Lower leg skin (tissue), 4 donors: ENCODE measurements at regions of chr19 and their contacts with region 1.

Region 1: DNA sequence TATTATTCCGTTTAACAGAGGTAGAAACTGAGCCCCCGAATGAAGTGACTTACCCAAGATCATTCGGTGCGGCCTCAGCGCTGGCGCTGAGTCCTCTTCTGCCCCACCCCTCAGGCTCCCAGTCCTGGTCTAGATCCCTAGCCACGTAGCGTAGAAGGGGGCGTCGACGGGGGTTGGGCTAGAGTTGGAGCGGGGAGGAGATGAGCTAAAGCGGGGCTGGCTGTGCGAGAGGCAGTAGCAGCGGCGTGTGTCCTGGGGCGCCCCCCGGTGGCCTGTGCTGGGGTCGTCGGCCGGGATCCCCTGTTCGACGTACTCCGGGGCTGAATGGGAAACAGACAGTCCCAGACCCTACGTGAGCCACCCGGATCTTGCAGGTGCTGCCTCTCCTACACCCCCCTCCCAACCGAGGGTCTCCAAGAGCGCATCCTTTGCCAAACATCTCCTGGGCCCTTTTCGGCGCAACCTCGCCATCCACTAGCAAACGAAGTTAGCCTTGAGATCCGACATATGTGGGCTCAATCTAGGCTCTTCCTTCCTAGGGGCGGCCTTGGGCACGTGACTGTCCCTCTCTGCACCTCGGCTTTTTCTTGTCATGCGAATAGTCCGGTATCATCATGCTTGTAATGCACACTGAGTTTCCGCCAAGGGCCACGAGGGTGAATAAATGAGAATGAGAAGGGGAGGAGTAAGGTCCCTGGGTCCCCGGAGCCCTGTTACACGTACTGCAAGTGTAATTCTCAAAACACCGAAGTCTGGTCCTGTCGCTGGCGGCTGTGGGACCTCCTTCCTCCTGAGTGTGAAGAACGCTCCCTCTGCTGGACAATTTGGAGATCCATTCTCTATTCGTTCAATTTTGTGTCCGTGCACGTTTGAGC is 47.7 kb downstream of the CYP4F22 start:
- DNase-seq: peak; percentile 86 to 99
- H3K4me3 ChIP-seq: no peak overlapping the region
- CTCF ChIP-seq: peak in 2 of 3 donors; percentile 3 to 51
- POLR2A ChIP-seq: no peak

Region 2: GRCh38 chr19:15091901-15092753 is 463.9 kb before region 1 on chr19:
- intact Hi-C with region 1: loop called (anchors 5 kb)
- DNase-seq: peak in 1 of 2 donors; percentile 55
- H3K4me3 ChIP-seq: no peak overlapping the region
- CTCF ChIP-seq: no peak
- POLR2A ChIP-seq: no peak

Region 3: DNA sequence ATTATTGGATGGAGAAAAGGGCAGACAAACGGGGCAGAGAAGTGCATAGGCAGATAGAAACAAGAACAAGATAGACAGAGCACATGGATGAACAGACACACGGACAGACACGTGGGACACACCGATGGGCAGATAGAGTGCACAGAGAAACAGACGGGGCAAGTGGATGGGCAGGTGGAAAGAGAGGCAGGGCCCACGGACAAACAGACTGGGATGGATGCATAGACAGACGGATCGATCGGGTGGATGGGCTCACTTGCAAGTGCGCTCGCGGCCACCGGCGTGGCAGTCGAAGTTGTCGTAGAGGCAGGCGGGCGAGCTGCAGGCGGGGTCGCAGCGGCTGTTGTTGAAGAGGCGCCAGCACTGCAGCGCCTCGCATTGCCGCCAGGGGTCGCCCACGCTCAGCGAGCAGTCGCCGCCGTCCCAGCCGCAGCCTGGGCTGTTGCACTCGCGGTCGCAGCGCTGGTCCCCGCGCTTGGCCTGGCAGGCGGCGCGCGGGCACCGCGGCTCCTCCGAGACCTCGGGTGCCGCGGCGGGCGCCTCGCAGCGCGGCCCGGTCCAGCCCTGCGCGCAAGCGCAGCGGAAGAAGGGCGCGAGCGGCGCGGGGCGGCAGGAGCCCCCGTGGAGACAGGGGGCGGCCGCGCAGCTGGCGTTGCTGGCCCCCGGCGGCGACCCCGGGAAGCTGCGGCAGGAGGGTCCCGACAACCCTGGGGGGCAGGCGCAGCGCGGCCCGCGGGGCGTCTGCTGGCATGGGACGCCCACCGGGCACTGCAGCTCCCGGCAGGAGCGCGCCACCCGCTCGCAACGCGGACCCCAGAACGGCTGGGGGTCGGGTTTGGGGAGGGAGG is 378.5 kb before region 1 on chr19:
- intact Hi-C with region 1: loop called (anchors 2 kb)
- DNase-seq: peak; percentile 53 to 95
- H3K4me3 ChIP-seq: no peak overlapping the region
- CTCF ChIP-seq: peak in 1 of 3 donors; percentile 77
- POLR2A ChIP-seq: no peak

Region 4: GRCh38 chr19:15276636-15277215 is 279.3 kb before region 1 on chr19:
- intact Hi-C with region 1: loop called (anchors 10 kb)
- DNase-seq: no peak
- H3K4me3 ChIP-seq: no peak overlapping the region
- CTCF ChIP-seq: no peak
- POLR2A ChIP-seq: no peak

Region 5: DNA sequence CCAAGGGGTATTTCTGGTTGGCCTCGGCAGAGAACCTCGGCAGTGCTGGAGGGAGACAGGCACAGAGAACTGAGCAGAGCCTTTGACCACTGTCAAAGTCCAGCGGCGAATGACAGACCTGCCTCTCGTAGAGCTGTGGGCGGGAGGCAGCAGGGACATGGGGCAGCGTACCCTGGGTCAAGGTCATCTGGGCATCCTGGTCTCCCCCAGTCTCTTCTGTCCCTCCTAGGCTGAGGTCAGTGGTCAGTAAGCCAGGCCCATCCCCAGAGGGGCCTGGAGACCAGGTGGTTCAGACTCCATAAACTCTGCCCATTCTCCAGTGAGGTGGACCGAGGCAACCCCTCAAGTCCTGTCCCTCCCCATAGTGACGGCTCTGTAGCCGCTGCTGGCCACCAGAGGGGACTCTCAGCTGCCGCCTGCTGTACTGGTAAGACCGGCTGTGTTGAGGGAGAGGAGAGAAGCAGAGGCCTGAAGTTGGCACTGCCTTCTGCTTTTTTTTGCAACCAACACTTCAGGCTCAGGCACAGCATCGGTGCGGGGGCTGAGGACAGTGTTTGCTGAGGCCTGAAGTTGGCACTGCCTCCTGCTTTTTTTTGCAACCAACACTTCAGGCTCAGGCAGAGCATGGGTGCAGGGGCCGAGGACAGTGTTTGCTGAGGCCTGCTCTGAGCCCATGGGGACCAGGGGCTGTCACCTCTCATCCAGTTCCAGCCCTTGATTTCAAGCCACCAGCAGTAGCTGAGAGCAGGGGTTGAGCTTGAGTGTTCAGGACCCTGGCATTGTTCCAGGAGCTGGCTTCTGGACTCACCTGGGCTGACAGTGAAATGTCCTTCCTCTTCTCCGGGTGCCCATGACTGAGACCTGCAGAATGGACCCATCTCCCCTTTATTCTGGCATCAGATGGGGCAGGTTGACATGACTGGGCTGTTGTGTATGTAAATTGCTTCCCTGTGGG is 76.3 kb before region 1 on chr19 and contains the start of gene PGLYRP2:
- intact Hi-C with region 1: loop called (anchors 10 kb)
- DNase-seq: no peak
- H3K4me3 ChIP-seq: no peak within 1 kb of the TSS
- CTCF ChIP-seq: no peak
- POLR2A ChIP-seq: no peak
- total RNA-seq, gene PGLYRP2: 0.23 to 0.80 (median 0.37) TPM in 3 of 4 donors, not detected in the other